ENCODE measurements at regions of chr2 and their contacts with region 1.

Region 1: GRCh38 chr2:96801005-96801785 is 14.9 kb upstream of the CNNM3 start:
- H3K4me3 ChIP-seq: no peak overlapping the region
- H3K27ac ChIP-seq: no peak overlapping the region
- H3K4me1 ChIP-seq: no peaks in the 10 kb centered on the region
- CTCF ChIP-seq: peak; percentile 87

Region 2: DNA sequence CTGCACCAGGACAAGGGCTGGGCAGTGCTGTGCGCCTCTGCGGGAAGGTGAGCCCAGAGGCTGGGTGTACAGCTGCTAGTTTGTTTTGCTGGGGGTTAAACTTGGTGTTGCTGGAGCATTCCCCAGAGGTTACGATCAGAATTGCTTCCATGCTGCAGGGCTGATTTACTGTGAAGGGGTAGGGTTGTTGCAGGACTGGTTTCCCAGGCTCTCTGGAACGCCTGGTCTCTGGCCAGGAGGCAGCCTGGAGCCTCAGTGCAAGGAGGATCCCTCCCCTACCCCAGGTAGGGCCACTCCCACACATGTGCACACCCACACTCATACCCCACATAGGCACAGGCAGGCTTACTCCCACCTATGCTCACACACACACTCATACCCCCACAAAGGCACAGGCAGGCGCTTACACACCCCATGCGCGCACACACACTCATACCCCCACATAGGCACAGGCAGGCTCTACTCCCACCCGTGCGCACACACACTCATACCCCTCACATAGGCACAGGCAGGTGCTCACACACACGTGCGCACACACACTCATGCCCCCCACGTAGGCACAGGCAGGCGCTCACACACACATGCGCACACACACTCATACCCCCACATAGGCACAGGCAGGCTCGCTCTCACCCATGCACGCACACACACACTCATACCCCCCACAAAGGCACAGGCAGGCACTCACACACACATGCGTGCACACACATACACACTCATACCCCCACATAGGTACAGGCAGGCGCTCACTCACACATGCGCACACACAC is 29.2 kb before region 1 on chr2:
- CTCF ChIA-PET with region 1: no interaction called
- POLR2A ChIA-PET with region 1: no interaction called
- H3K4me3 ChIP-seq: no peak overlapping the region
- H3K27ac ChIP-seq: no peak overlapping the region
- H3K4me1 ChIP-seq: no peaks in the 10 kb centered on the region; the same call in 1 of the 2 replicates
- CTCF ChIP-seq: no peak

Region 3: DNA sequence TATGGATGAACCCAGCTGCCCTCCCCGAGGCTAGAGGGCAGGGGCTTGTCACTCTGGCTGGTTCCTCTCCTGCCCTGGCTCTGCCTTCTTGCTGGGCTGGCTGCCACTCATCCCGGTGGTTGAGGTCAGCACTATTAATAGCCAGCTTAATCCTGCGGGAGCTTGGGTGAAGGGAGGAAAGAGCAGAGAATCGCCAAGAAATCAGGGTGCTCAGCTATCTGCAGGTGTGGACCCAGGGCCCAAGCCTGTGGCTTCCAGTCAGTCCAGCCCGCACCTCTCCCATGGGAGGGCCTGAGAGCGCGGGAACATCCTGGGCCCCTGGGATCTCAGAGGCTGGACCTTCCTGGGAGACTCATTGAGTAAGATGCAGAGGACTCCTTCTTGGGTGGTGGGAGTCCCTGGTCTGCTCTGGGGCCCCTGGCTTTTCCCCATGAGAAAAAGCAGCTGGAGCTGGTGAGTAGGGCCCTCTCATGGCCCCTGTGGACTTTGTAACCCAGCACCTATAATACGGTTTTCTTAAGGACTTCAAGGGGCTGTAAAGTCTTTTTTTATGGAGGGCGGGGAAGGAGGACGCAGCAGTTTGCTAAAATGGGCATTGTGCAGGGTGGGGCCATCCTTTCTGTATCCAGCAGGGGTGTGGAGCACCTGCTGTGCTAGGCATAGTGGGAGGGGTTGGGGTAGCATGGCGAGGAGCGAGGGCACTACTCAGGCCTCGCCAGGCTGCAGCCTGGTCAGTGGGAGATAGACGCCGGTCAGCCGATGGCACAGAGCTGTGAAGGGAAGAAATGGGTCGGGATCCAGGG is 12.6 kb before region 1 on chr2:
- CTCF ChIA-PET with region 1: interaction called, 11 read pairs
- POLR2A ChIA-PET with region 1: no interaction called
- H3K4me3 ChIP-seq: no peak overlapping the region
- H3K27ac ChIP-seq: peak overlapping the region; percentile 28; the same call in 1 of the 2 replicates
- H3K4me1 ChIP-seq: peaks cover 14% of the 10 kb centered on the region
- CTCF ChIP-seq: 0 out of 2 replicates have a peak, but pooled peaks have one; percentile 12

Region 4: DNA sequence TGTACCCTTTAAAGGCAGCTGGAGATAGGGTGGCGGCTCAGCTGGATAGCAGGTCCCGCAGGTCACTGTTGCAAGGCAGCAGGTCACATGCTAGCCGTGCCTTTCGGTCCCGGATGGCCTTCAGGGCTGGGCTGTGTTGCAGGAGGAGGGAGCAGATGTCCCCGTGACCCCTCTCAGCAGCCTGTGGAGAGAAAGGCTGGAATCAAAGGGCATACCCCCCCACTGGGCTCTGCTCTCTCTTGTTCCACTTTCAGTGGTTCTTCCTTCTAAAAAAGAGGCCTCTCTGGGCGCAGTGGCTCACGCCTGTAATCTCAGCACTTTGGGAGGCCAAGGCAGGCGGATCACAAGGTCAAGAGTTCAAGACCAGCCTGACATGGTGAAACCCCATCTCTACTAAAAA is 47.1 kb after region 1 on chr2:
- CTCF ChIA-PET with region 1: no interaction called
- POLR2A ChIA-PET with region 1: no interaction called
- H3K4me3 ChIP-seq: no peak overlapping the region
- H3K27ac ChIP-seq: no peak overlapping the region
- H3K4me1 ChIP-seq: no peaks in the 10 kb centered on the region
- CTCF ChIP-seq: no peak